ENCODE measurements at regions of chr13 and their contacts with region 1.

Region 1: GRCh38 chr13:44243198-44243857 is 130.3 kb upstream of the SERP2 start:
- DNase-seq: peak; percentile 69
- H3K4me3 Mint-ChIP-seq: no peak overlapping the region
- H3K27ac Mint-ChIP-seq: no peak overlapping the region
- H3K4me1 Mint-ChIP-seq: peaks cover 10% of the 10 kb centered on the region
- H3K27me3 Mint-ChIP-seq: peaks cover 4% of the 10 kb centered on the region

Region 2: DNA sequence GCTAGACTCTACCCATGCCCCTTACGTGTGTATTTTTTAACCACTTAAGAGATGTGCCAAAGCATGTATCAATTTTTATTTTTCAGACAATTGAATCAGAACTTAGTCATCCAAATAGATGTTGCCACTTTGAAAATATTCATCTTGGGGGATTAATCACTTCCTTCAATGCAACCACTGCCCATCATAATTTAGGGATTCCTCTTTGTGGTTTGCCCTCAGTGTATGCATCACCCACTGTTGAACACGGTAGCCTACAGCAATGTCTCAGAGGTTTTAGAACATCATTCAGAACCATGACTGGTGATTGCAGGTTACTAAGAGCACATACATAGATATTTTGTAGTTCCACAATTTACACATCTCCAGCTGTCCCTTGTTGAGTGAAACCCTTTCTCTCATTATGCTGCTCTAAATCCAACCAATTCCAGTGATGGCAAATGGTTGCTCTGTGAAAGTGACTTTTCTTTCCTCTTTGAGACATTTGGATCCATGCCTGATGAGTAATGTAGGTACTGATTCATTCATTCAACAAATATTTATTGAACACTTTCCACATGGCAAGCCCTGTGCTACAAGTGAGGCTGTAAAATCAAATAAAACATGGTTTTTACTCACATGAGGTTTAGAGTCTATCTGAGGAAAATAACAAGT is 69.7 kb after region 1 on chr13:
- CTCF ChIA-PET with region 1: no interaction called
- intact Hi-C with region 1: loop called (anchors 2 kb)
- DNase-seq: peak; percentile 43
- H3K4me3 Mint-ChIP-seq: no peak overlapping the region
- H3K27ac Mint-ChIP-seq: peak overlapping the region; percentile 42
- H3K4me1 Mint-ChIP-seq: peaks cover 14% of the 10 kb centered on the region
- H3K27me3 Mint-ChIP-seq: peaks cover 21% of the 10 kb centered on the region